Activated CD8-positive, alpha-beta T cell treated with anti-CD3 and anti-CD28 coated beads for 36 hours (primary cell): ENCODE measurements at regions of chr6 and their contacts with region 1.

Region 1: DNA sequence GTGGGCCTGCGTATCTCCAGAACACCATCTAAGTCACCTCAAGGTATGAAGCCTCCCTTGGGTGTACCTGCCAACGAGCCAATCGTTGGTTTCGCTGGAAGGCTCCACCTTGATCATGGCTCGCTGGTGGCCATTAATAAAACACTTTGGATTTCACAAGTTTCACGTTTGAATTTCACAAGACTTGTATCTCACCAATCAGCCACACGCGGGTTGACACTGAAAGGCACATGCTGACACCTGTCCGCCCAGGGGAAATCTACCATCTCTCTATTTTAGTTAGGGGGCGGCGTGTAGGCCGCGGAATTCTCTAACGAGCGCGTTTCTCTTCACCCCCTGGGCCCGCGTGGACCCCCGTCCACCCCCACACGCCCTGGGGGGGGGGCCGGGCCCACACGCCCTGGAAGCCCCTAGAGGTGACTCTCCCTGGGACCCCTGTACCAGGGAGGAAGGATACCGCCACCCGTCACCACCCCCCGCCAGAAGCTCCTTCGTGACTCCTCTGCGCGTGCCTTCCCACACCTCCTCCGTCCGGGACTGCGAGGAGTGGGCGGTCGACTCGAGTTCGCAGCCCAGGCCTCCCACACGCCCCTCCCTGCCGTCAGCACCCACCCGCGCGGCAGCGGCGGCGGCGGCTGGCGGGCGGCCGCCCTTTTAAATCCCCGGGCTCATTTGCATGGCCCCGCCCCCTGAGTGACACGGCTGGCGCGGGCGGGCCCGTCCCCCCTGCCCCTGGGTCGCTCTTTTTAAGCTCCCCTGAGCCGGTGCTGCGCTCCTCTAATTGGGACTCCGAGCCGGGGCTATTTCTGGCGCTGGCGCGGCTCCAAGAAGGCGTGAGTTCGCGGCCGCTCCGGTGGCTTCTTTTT is at the start of gene HMGA1:
- DNase-seq: peak; percentile 93
- ATAC-seq: peak; percentile 70
- H3K4me3 Mint-ChIP-seq: peak within 1 kb of the TSS; percentile 93
- H3K27ac Mint-ChIP-seq: peak within 1 kb of the TSS; percentile 94
- H3K4me1 Mint-ChIP-seq: peaks cover 29% of the 10 kb centered on the region
- H3K27me3 Mint-ChIP-seq: no peaks in the 10 kb centered on the region
- CTCF ChIP-seq: no peak
- total RNA-seq, gene HMGA1: 683 to 709 TPM

Region 2: DNA sequence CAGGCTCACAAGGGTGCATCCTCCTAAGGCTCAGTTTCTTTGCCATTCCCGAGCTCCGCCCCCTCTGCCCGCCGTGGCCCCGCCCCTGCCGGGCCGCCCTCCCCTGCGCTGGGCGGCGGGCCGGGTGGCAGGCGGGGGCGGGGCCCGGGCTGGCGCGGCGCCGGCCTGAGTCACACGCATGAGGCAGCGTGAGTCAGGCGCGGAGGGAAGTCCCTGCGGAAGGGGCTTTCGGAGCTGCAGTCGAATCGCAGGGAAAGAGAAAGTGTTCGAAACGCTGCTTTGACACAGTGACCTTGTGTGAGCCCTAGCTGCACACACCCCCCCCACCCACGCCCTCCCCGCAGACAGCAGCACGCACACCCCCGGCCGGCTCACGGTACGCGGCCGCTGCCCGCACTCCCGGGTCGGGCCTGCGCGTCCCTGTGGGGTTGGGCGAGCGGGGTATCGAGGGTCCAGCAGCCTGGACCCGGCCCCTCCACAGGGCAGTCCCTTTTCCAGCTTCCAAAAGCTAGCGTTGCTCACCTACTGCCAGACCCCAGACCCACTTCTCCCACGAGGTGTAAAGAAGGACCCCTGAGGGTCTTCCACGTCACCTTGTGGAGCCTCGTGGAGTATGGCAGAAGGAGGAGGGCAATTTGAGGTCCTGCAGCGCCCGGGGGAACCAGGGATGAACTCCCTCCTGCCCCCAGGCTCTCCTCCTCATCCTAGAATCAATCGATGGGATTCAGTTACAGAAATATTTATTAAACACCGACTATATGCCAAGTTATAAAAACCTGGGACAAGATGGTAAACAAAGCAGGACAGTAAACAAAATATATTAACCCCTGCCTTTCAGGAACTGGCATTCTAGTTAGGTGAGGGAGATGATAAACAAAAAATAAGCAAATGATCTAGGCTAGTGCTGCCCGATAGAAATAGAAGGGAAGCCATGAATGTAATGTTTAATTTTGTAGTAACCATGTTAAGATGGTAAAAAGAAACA is 12.1 kb before region 1 on chr6:
- CTCF ChIA-PET with region 1: interaction called, 3 read pairs
- POLR2A ChIA-PET with region 1: interaction called, 61 read pairs
- intact Hi-C with region 1: no loop called
- DNase-seq: peak; percentile 96
- ATAC-seq: peak; percentile 98
- H3K4me3 Mint-ChIP-seq: peak overlapping the region; percentile 58
- H3K27ac Mint-ChIP-seq: peak overlapping the region; percentile 93
- H3K4me1 Mint-ChIP-seq: peaks cover 41% of the 10 kb centered on the region
- H3K27me3 Mint-ChIP-seq: no peaks in the 10 kb centered on the region
- CTCF ChIP-seq: no peak

Region 3: GRCh38 chr6:34248727-34249551 is 12.6 kb after region 1 on chr6 and contains the start of gene SMIM29:
- CTCF ChIA-PET with region 1: interaction called, 3 read pairs
- POLR2A ChIA-PET with region 1: interaction called, 25 read pairs
- intact Hi-C with region 1: no loop called
- DNase-seq: peak; percentile 97
- ATAC-seq: peak; percentile 88
- H3K4me3 Mint-ChIP-seq: peak within 1 kb of the TSS; percentile 85
- H3K27ac Mint-ChIP-seq: peak within 1 kb of the TSS; percentile 89
- H3K4me1 Mint-ChIP-seq: peaks cover 37% of the 10 kb centered on the region
- H3K27me3 Mint-ChIP-seq: no peaks in the 10 kb centered on the region
- CTCF ChIP-seq: peak; percentile 88
- total RNA-seq, gene SMIM29: 13.3 to 16.4 TPM

Region 4: DNA sequence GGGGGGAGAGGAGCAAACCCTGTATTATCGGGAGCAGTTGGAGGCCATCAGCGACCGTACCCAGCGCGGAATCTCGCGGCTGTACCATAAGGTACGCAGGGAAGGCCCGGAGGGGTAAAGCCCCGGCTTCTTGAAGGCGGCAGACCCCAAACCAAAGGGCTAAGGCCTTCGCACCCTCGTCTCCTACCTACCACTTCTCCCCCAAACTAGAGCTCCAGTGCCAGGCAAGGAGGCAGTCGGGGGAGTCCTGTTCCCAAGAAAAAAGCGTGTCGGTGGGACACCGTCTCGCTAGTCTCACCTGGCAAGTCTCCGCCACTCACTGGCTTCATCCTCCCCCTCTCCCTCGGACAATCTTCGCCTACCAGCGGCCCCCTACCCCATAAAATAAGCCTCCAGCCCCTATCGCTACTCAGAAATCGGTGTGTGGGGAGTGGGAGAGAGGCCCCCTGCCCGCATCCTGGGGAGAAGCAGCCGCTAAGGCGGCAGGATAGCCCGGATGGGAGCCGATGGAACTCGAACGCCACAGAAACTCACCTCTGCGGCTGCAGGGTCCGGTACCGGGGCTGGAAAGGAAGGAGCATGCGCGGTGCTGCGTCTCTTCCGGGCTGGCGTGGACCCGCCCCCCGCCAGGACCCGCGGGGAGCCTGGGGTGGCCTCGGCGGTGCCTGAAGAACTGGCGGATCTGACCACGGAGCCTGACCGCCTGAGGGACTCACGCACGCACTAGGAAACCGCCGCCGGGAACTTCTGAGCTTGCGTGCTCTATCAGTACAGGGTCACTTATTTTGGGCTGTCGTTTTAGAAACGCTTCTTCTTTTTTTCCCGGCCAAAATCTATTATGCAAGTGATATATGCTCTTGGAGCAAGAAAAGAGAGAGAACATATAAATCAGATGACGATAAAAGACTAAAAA is 189.4 kb after region 1 on chr6 and contains the start of gene RPS10:
- CTCF ChIA-PET with region 1: no interaction called
- POLR2A ChIA-PET with region 1: interaction called, 16 read pairs
- intact Hi-C with region 1: no loop called
- DNase-seq: peak; percentile 92
- ATAC-seq: peak; percentile 98
- H3K4me3 Mint-ChIP-seq: peak within 1 kb of the TSS; percentile 98
- H3K27ac Mint-ChIP-seq: peak within 1 kb of the TSS; percentile 100
- H3K4me1 Mint-ChIP-seq: peaks cover 33% of the 10 kb centered on the region
- H3K27me3 Mint-ChIP-seq: peaks cover 2% of the 10 kb centered on the region
- CTCF ChIP-seq: no peak
- total RNA-seq, gene RPS10: 2,208 to 2,269 TPM